GM12878 (cell line): ENCODE measurements at regions of chr10 and their contacts with region 1.

Region 1: DNA sequence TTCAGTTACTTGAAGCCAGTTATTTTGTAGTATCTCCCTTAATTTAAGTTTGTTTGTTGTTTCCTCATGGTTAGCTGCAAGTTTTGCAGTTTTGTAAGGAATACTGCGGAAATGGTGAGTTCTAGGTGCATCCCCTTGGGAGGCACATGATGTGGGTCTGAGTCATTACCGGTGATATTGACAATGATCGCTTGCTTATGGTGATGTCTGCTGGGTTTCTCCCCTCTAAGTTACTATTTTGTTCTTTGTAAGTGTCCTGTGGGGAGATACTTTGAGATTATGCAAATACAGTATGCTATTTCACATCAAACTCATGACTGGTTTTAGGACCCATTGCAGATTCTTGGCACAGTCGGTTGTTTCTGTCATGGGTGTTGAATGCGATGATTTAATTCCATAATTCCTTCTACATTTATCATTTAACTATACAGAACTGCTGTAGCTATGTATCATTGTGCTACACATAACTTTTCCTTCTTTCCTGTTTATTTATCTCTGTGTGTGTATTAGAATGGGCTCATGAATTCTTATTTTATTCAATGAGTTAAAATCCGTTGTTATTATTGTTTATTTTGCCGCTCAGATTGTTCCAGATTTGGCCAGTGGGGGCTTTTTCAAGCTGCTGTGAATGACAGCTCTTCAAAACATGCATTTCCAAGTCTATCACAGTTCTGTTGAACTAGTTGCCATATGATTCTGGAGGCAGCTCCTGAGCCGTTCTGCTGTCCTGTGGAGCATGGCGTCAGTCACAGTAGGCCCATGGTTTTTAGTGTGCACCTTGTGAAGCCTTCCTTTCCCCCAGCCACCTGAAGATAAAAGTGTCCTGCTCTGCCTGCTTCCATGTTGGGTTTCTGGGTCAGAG is 18.4 kb downstream of the TSPAN14 start:
- DNase-seq: peak; percentile 92
- ATAC-seq: peak; percentile 88
- H3K4me3 ChIP-seq: peak overlapping the region; percentile 35
- H3K27ac ChIP-seq: peak overlapping the region; percentile 87
- H3K4me1 ChIP-seq: peaks cover 65% of the 10 kb centered on the region
- H3K27me3 ChIP-seq: no peaks in the 10 kb centered on the region
- CTCF ChIP-seq: no peak
- EP300 ChIP-seq: peak; percentile 66 to 67; a peak in 2 of 4 replicates
- POLR2A ChIP-seq: no peak
- RAD21 ChIP-seq: no peak

Region 2: GRCh38 chr10:80487791-80488538 is 15.5 kb after region 1 on chr10:
- CTCF ChIA-PET with region 1: interaction called, 4 read pairs
- POLR2A ChIA-PET with region 1: interaction called, 30 read pairs
- RAD21 ChIA-PET with region 1: interaction called, 16 read pairs
- SMC1A ChIA-PET with region 1: interaction called, 6 read pairs
- in situ Hi-C with region 1: no loop called
- intact Hi-C with region 1: no loop called
- DNase-seq: no peak
- ATAC-seq: no peak
- H3K4me3 ChIP-seq: no peak overlapping the region
- H3K27ac ChIP-seq: no peak overlapping the region
- H3K4me1 ChIP-seq: peaks cover 16% of the 10 kb centered on the region
- H3K27me3 ChIP-seq: no peaks in the 10 kb centered on the region
- CTCF ChIP-seq: no peak
- EP300 ChIP-seq: no peak
- POLR2A ChIP-seq: no peak
- RAD21 ChIP-seq: no peak

Region 3: DNA sequence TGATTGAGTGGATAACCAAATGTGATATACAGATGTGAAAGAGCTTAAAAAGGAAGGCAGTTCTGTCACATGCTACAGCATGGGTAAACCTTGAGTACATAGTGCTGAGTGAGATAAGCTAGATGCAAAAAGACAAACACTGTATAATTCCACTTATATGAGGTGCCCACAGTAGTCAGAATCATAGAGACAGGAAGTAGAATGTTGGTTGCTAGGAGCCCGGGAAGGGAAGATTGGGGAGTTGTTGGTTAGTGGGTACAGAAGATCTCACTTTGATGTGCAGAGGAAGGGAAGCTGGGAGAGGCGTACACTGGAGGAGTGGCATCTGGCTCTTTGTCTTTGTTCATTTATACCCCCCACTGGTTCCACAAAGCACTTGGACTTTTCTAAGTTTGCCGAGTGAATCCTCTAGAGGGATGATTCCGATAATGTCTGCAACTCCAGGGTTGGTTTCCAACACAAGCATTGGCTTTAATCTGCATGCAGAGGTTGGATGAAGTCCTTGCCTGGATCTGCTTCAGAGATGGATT is 21.1 kb after region 1 on chr10:
- CTCF ChIA-PET with region 1: interaction called, 402 read pairs
- POLR2A ChIA-PET with region 1: interaction called, 35 read pairs
- RAD21 ChIA-PET with region 1: interaction called, 412 read pairs
- SMC1A ChIA-PET with region 1: interaction called, 1,038 read pairs
- in situ Hi-C with region 1: no loop called
- intact Hi-C with region 1: no loop called
- DNase-seq: no peak
- ATAC-seq: peak; percentile 75
- H3K4me3 ChIP-seq: peak overlapping the region; percentile 15; the same call in 1 of the 2 replicates
- H3K27ac ChIP-seq: peak overlapping the region; percentile 47
- H3K4me1 ChIP-seq: peaks cover 26% of the 10 kb centered on the region
- H3K27me3 ChIP-seq: no peaks in the 10 kb centered on the region
- CTCF ChIP-seq: no peak
- EP300 ChIP-seq: no peak
- POLR2A ChIP-seq: no peak
- RAD21 ChIP-seq: no peak